ENCODE measurements at regions of chr6 and their contacts with region 1.

Region 1: GRCh38 chr6:41936073-41936837 is 5.4 kb downstream of the CCND3 start:
- DNase-seq: peak; percentile 80
- H3K4me3 ChIP-seq: no peak overlapping the region
- H3K27ac ChIP-seq: no peak overlapping the region
- H3K4me1 ChIP-seq: peaks cover 34% of the 10 kb centered on the region
- H3K27me3 ChIP-seq: no peaks in the 10 kb centered on the region
- CTCF ChIP-seq: peak; percentile 85 to 95

Region 2: DNA sequence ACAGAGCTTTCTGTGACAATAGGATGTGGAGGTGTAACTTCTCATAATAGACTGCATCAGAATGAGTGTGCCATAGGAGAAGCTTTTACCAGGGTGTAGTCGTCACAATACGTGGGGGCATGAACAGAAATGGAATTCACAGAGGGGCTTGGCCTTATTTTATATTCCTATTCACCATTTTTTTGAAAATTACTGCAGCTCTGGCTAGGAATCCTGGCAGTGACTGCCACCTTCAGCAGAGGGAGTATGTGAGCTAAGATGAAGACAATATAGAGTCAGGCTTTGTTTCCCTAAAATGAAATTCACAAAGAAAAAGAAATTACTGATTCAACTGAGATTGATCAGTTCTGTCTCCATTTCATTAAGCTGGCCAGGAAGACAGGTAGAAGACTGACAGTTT is 134.9 kb before region 1 on chr6:
- CTCF ChIA-PET with region 1: interaction called, 3 read pairs
- dilution Hi-C with region 1: no loop called
- in situ Hi-C with region 1: no loop called
- intact Hi-C with region 1: loop called (anchors 1 kb)
- DNase-seq: no peak
- H3K4me3 ChIP-seq: no peak overlapping the region
- H3K27ac ChIP-seq: no peak overlapping the region
- H3K4me1 ChIP-seq: no peaks in the 10 kb centered on the region
- H3K27me3 ChIP-seq: no peaks in the 10 kb centered on the region
- CTCF ChIP-seq: peak; percentile 65 to 70

Region 3: DNA sequence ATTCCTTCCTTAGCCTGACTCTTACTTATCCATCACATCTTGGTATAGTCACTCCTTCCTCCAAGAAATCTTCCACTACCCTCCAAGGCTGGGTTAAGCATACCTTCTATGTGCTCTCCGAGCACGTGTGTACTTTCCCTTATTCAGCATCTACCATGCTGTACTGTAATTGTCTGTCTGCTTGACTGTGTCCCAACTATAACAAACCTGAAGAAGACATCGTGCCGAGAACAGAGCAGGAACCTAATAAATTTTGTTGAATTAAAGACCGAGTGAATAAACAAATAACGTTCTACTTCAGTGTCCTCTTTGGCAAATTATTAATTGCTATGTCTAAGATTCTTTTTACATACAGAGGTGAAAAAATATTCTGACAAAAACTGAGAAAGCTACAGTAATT is 76.9 kb before region 1 on chr6:
- CTCF ChIA-PET with region 1: no interaction called
- dilution Hi-C with region 1: loop called (anchors 5 kb)
- in situ Hi-C with region 1: no loop called
- intact Hi-C with region 1: no loop called
- DNase-seq: no peak
- H3K4me3 ChIP-seq: no peak overlapping the region
- H3K27ac ChIP-seq: no peak overlapping the region
- H3K4me1 ChIP-seq: no peaks in the 10 kb centered on the region
- H3K27me3 ChIP-seq: no peaks in the 10 kb centered on the region
- CTCF ChIP-seq: no peak

Region 4: DNA sequence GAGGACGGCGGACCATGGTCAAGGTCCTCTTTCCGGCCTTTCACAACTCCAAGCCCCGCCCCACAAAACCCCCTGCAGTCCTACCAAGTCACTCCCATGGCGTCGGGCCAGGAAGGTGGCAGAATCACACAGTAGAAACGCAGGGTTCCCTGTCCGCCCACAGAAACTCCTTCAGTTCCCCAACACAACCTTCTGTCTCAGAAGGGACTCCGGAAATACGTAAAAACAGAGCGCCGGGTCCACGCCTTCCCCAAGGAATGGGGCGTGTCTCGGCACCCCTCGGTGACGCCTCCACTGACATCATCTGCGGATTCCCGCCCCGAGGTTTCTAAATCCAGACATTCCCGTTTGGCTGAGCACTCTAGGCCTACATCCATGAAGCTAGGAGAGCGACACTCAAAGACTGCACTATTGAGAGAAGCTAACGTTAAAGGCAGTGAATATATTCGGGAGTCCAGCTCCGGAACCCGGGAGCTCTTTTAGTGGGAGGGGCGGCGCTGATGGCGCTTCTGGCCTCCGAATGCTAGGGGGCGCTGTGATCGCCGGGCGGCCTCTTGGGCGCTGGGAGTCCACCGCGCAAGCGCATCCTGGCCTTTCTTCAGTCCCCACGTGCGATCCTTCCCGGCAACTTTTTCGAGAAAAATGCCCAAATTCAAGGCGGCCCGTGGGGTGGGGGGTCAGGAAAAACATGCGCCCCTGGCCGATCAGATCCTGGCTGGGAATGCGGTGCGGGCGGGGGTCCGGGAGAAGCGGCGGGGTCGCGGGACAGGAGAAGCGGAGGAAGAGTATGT is 15.1 kb before region 1 on chr6 and contains the starts of genes BYSL and MED20:
- CTCF ChIA-PET with region 1: interaction called, 10 read pairs
- dilution Hi-C with region 1: no loop called
- in situ Hi-C with region 1: no loop called
- intact Hi-C with region 1: loop called (anchors 1 kb)
- DNase-seq: peak; percentile 98
- H3K4me3 ChIP-seq: peak within 1 kb of the TSS; percentile 75 to 92 (median 87)
- H3K27ac ChIP-seq: peak within 1 kb of the TSS; percentile 100
- H3K4me1 ChIP-seq: peaks cover 34% of the 10 kb centered on the region
- H3K27me3 ChIP-seq: no peaks in the 10 kb centered on the region
- CTCF ChIP-seq: peak; percentile 87 to 96
- total RNA-seq, gene BYSL: 14.2 to 52.5 TPM
- total RNA-seq, gene MED20: 22.4 to 23.7 TPM

Region 5: DNA sequence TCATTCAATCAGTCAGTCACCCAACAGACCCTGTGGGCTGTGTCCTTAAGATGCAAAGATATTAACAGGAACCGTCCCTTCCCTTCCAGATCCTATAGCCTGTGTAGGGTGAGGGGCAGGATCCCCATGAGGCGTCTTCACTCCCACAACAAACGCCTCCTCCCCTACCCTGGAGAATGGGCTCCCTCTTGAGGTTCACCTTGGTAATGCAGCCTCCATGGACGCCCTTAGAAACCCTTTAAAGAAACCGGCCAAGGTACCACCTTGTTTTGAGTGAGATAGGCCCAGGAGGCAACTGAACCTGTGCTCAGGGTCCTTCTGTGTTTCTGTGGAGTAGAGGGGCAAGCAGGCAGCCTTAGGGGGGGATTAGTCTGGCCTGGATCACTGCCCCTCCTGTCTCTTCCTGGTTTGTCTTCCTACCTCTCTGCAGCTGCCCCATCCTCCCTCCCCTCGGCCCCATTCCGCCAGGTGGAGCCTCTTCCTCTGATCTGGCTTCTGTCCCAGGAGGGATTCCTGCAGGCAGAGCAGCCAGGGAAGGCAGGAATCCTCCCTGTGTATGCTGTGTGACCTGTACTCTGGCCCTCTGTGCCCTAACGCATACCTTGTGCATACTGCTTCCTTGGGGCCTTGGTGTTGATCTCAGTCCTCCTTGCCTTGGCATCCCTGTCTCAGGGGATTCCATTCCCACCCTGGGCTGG is 230.3 kb after region 1 on chr6:
- CTCF ChIA-PET with region 1: no interaction called
- dilution Hi-C with region 1: no loop called
- in situ Hi-C with region 1: no loop called
- intact Hi-C with region 1: loop called (anchors 1 kb)
- DNase-seq: peak; percentile 78
- H3K4me3 ChIP-seq: no peak overlapping the region
- H3K27ac ChIP-seq: no peak overlapping the region
- H3K4me1 ChIP-seq: peaks cover 8% of the 10 kb centered on the region
- H3K27me3 ChIP-seq: no peaks in the 10 kb centered on the region
- CTCF ChIP-seq: peak; percentile 83 to 96